GM12878 (cell line): ENCODE measurements at regions of chr1 and their contacts with region 1.

Region 1: DNA sequence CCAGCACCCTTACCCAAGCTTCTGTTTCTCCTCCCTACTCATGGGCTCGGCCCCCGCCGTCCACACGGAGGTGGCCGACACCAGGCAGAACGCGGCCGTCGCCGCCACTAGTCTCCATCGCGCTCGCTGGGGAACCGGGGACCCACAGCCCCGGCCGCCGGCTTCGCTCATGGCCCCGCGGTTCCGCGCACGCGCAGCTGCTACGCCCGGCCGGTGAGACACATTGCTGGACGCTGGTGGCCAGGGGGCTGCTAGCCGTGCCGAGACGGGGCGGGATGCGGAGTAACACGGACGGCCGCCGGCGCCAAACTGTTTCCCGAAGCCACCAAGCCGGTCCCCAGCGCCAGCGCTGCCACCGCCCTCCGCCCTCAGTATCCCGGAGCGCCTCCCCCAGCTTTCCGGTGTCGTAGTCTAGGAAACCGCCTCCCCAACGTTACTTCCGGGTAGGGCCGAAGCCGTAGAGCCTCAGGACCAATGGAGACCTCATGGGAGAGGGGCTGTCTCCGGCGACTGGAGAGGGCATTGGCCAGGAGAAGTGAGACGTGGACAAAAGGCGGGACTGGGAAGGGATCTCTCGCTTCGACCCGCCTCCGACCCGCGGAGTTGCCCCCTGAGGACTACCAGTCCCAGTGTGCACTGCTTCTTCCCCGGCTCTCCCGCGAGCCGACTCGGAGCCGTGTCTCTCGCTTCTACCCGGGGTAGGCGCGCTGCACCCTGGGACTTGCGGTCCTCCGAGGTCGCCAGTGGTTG is at the start of gene EDEM3:
- DNase-seq: peak; percentile 97
- ATAC-seq: peak; percentile 95
- H3K4me3 ChIP-seq: peak within 1 kb of the TSS; percentile 82
- H3K27ac ChIP-seq: peak within 1 kb of the TSS; percentile 87
- H3K4me1 ChIP-seq: no peaks in the 10 kb centered on the region
- H3K27me3 ChIP-seq: no peaks in the 10 kb centered on the region
- CTCF ChIP-seq: no peak
- EP300 ChIP-seq: no peak
- POLR2A ChIP-seq: peak; percentile 95
- RAD21 ChIP-seq: no peak
- polyA plus RNA-seq, gene EDEM3: 6.4 to 9.2 TPM

Region 2: DNA sequence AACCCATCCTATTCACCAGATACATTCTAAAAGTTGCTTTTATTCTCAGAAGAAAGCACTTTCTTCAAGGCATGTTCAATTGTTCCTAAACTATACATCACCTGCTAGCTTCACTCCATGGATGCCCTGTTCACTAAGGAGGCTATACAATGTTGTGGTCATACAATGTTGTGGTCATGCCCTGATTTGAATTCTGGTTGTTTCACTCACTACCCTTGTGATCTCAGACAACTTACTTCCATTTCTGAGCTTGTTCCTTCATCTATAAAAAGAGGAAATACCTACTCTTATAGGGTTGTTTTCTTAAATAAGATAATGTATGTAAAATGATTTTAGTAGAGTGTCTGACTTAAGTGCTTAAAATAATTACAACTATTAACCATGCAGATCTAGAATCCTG is 19.7 kb before region 1 on chr1:
- CTCF ChIA-PET with region 1: interaction called, 4 read pairs
- POLR2A ChIA-PET with region 1: interaction called, 6 read pairs
- RAD21 ChIA-PET with region 1: interaction called, 21 read pairs
- SMC1A ChIA-PET with region 1: interaction called, 25 read pairs
- in situ Hi-C with region 1: no loop called
- intact Hi-C with region 1: no loop called
- DNase-seq: peak; percentile 23
- ATAC-seq: peak; percentile 82
- H3K4me3 ChIP-seq: no peak overlapping the region
- H3K27ac ChIP-seq: no peak overlapping the region
- H3K4me1 ChIP-seq: peaks cover 11% of the 10 kb centered on the region
- H3K27me3 ChIP-seq: no peaks in the 10 kb centered on the region
- CTCF ChIP-seq: no peak
- EP300 ChIP-seq: no peak
- POLR2A ChIP-seq: no peak
- RAD21 ChIP-seq: no peak

Region 3: DNA sequence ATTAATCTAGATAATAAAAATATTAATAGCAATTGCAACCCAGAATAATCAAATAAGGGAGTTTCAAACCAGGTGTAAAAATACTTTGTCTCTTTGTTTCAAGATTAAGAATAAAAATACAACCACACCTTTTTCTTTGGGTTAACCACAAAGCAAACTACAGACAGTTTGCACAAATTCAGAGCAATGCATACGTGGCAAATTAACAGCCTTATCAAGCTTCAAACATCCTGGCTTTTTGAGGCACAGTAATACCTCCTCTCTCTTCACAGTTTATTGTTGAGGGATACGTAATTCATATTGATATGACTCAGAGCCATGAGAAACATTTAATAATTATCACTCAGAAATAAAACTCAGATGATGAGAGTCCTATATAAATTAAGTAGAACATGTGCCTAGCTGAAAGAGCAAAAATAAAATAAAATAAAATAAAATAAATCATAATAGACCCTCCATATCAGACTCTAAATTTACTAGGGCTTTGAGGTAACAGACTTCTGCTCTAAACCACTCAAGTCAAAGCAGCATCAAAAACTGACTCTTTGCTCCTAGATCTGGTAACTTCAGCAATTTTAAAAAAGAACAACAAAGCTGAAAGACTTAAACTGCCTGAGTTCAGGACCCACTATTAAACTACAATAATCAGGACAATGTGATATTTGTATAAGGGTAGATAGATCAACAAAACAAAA is 11.4 kb before region 1 on chr1:
- CTCF ChIA-PET with region 1: interaction called, 11 read pairs
- POLR2A ChIA-PET with region 1: interaction called, 13 read pairs
- RAD21 ChIA-PET with region 1: interaction called, 11 read pairs
- SMC1A ChIA-PET with region 1: interaction called, 39 read pairs
- in situ Hi-C with region 1: no loop called
- intact Hi-C with region 1: no loop called
- DNase-seq: peak; percentile 57
- ATAC-seq: peak; percentile 74
- H3K4me3 ChIP-seq: 0 out of 2 replicates have a peak overlapping the region, but pooled peaks have one; percentile 35
- H3K27ac ChIP-seq: peak overlapping the region; percentile 71
- H3K4me1 ChIP-seq: peaks cover 35% of the 10 kb centered on the region
- H3K27me3 ChIP-seq: no peaks in the 10 kb centered on the region
- CTCF ChIP-seq: no peak
- EP300 ChIP-seq: peak; percentile 85 to 87
- POLR2A ChIP-seq: no peak
- RAD21 ChIP-seq: no peak

Region 4: DNA sequence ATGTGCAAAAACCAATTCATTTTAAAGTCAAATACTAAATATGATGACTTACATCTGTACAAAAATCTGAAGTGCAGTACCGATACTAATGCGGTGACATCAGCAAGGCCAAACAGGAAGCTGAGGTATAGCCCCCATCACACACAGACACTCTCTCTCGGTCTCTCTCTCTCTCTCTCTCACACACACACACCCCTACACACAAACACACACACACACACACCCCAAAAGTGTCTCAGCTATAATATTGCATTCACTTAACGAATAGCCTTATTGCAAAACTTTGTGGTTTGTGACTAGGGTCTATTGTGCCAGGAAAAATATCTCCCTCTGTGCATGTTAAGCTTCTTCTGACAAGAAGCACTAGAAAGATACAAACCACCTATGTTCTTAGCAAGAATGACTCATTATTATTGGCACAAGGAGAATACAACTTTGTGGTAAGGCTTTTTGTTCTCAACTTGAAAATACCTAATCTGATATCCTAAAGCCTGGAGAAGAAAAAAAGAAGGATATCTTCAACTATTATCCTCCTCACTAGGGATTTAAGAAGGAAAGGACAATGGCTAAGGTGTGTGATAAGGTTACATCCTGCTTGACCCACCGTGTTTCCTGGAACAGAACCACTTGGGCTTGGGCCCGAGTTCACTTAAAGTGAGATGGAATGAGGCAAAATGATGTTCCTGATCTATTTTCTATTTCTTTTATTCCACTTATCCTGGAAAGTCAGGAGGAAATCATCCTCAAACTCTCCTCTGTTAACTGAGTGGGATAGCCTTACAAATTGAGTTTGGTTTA is 112.5 kb after region 1 on chr1:
- CTCF ChIA-PET with region 1: no interaction called
- POLR2A ChIA-PET with region 1: no interaction called
- RAD21 ChIA-PET with region 1: no interaction called
- SMC1A ChIA-PET with region 1: no interaction called
- in situ Hi-C with region 1: no loop called
- intact Hi-C with region 1: loop called (anchors 5 kb)
- DNase-seq: peak; percentile 79
- ATAC-seq: peak; percentile 94
- H3K4me3 ChIP-seq: 0 out of 2 replicates have a peak overlapping the region, but pooled peaks have one; percentile 11
- H3K27ac ChIP-seq: peak overlapping the region; percentile 87
- H3K4me1 ChIP-seq: peaks cover 30% of the 10 kb centered on the region
- H3K27me3 ChIP-seq: no peaks in the 10 kb centered on the region
- CTCF ChIP-seq: no peak
- EP300 ChIP-seq: peak; percentile 84 to 87
- POLR2A ChIP-seq: no peak
- RAD21 ChIP-seq: no peak

Region 5: GRCh38 chr1:185156854-185157598 is 402.4 kb after region 1 on chr1 and contains the starts of genes SWT1 and TRMT1L:
- CTCF ChIA-PET with region 1: no interaction called
- POLR2A ChIA-PET with region 1: interaction called, 4 read pairs
- RAD21 ChIA-PET with region 1: no interaction called
- SMC1A ChIA-PET with region 1: interaction called, 3 read pairs
- in situ Hi-C with region 1: no loop called
- intact Hi-C with region 1: loop called (anchors 5 kb)
- DNase-seq: peak; percentile 93
- ATAC-seq: peak; percentile 92
- H3K4me3 ChIP-seq: peak within 1 kb of the TSS; percentile 94
- H3K27ac ChIP-seq: peak within 1 kb of the TSS; percentile 94
- H3K4me1 ChIP-seq: peaks cover 18% of the 10 kb centered on the region; the same call in 1 of the 2 replicates
- H3K27me3 ChIP-seq: no peaks in the 10 kb centered on the region
- CTCF ChIP-seq: no peak
- EP300 ChIP-seq: no peak
- POLR2A ChIP-seq: peak; percentile 89
- RAD21 ChIP-seq: no peak
- polyA plus RNA-seq, gene SWT1: 1.0 to 1.4 TPM
- polyA plus RNA-seq, gene TRMT1L: 3.5 to 4.1 TPM